Heart right ventricle (tissue), 16 donors: ENCODE measurements at regions of chr12 and their contacts with region 1.

Region 1: DNA sequence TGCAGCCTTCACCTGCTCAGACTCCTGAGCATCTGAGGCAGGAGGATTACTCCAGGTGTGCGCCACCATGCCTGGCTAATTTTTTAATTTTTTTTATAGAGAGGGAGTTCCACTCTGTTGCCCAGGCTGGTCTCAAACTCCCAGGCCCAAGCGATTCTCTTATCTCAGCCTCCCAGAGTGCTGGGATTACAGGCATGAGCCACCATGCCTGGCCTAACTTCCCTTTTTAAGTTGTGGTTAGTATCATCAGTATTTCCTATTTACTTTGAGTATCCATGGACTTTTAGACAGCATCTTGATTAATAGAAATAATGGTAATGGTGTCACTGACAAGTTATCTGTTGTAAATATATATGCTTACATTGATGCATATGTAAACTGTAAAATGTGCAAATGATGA is 116.9 kb downstream of the FGD4 start:
- DNase-seq: no peak
- ATAC-seq: no peak
- H3K4me3 ChIP-seq: no peak overlapping the region
- H3K27ac ChIP-seq: no peak overlapping the region
- H3K4me1 ChIP-seq: peaks cover 4 to 42% (median 20%) of the 10 kb centered on the region in 9 donors
- H3K27me3 ChIP-seq: no peaks in the 10 kb centered on the region
- CTCF ChIP-seq: no peak

Region 2: GRCh38 chr12:32494656-32495055 is 21.6 kb before region 1 on chr12:
- intact Hi-C with region 1: loop called in 1 of 10 experiments (anchors 1 kb)
- DNase-seq: no peak
- ATAC-seq: no peak
- H3K4me3 ChIP-seq: no peak overlapping the region
- H3K27ac ChIP-seq: peak overlapping the region in 1 of 10 donors; percentile 17
- H3K4me1 ChIP-seq: peaks cover 0 to 56% (median 18%) of the 10 kb centered on the region in 9 donors
- H3K27me3 ChIP-seq: no peaks in the 10 kb centered on the region
- CTCF ChIP-seq: no peak

Region 3: DNA sequence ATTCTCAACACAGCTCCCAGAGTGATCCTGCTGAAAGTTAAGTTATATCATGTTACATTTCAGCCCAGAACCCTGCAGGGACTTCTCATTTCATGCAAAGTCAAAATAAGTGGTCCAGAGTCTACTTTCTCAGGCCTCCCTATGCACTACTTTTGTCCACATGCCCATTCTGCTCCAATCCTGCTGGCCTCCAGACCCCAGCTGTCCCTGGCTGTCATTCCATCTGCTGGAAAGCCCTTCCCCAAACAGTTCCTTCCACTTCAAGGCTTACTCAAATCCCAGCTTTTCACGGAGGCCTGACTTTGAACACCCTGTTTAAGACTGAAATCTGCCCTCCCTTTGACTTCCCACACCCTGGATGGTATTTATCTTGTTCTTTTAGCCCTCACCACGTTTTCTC is 53.0 kb after region 1 on chr12:
- intact Hi-C with region 1: no loop called
- DNase-seq: no peak
- ATAC-seq: peak in 1 of 8 donors; percentile 5
- H3K4me3 ChIP-seq: no peak overlapping the region
- H3K27ac ChIP-seq: peak overlapping the region in 8 of 10 donors; percentile 26 to 79 (median 66)
- H3K4me1 ChIP-seq: peaks cover 0 to 66% (median 57%) of the 10 kb centered on the region in 9 donors
- H3K27me3 ChIP-seq: no peaks in the 10 kb centered on the region
- CTCF ChIP-seq: no peak